Sciatic nerve (tissue), 2 donors: ENCODE measurements at regions of chr15 and their contacts with region 1.

Region 1: DNA sequence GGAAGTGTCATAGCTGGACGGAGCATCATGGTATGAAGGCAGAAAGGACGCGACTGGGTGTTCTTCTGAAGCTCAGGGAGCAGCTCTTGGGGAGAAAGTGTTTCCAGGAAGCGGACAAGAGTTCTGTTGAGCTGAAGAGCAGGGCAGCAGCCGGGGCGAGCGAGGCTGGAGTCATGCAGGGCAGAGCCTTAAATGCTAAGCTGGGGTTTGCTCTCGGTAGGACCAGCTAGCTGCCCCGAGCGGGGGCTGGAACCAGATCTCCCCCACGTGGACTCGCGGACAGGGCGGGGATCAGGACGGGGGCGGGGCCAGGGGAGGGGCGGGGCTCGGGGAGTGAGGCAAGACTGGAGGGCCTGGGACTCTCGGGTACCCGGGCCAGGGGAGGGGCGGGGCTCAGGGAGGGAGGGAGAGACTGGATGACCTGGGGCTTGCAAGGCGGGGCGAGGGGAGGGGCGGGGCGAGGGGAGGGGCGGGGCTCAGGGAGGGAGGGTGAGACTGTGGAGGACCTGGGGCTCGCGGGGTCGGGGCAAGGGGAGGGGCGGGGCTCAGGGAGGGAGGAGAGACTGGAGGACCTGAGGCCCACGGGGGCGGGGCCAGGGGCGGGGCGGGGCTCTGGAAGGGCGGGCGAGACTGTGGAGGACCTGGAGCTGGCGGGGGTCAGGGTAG is 486 bp upstream of the FAH start:
- DNase-seq: peak; percentile 98
- ATAC-seq: peak; percentile 96

Region 2: DNA sequence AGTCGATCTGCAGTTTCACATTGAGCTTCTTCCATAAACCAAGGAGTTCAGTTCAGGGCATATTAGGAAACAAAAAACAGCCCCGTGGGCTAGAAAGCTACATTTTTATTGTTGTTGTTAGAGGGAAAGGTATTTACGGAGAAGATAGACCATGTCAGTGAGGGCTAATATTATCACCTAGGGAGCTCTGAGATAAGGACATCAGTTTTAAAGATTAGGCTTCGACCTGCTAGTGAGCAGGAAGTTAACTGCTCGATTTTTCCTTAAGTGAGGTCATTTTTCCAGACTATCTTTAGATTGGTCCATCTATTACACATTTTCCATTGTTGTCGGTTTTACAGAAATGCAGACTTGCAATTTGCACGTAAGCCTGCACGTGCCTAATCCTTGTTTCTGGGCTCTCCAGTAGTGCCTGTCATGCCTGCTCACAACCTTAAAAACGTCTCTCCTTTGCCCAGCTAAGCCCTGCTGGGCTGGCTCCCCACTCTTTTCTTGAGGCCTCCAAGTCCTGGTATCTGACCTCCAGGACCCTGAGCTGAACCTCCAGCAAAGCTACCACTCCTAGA is 328.1 kb before region 1 on chr15:
- intact Hi-C with region 1: no loop called
- DNase-seq: no peak
- ATAC-seq: no peak

Region 3: GRCh38 chr15:80059786-80060355 is 92.4 kb before region 1 on chr15:
- intact Hi-C with region 1: loop called (anchors 10 kb)
- DNase-seq: no peak
- ATAC-seq: peak; percentile 67

Region 4: DNA sequence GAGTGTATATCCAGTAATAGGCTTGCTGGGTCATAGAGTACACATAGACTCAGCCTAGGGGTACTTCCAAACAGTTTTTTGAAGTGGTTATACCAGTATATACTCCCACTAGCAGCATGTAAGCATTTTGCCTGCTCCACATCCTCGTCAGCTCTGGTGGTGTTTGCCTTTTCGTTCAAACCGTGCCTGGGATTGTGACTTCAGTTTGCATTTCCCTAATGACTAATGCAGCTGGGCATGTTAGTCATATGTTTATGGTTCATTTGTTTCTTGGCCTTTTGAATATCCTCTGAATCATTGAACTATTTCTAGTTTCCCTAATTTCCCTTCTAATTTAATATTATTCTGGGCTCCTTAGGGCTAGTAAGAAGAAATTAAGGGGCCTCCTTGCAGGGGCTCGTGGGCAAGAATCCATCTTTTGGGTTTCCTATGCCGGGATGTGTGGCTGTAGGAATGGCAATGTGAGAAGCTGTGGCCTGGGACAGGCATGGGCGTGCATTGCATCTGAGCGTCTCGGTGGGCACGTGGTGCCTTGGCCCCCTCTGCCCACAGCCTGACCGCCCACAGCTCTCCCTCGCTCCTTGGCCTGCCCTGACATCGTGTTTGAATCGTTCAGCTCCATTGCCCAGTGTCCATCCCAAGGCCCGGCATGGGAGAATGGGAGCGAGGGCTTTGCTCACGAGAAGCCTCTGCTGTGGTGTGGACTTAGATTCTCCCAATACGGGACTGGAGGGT is 26.9 kb after region 1 on chr15:
- intact Hi-C with region 1: no loop called
- DNase-seq: no peak
- ATAC-seq: no peak